ENCODE measurements at regions of chr10 and their contacts with region 1.

Region 1: GRCh38 chr10:3538658-3539531 is 246.1 kb downstream of the KLF6 start:
- DNase-seq: peak; percentile 59 to 92
- H3K4me3 ChIP-seq: peak overlapping the region in 1 of 2 donors; percentile 50
- H3K27ac ChIP-seq: peak overlapping the region; percentile 35 to 61
- H3K4me1 ChIP-seq: peaks cover 0 to 20% of the 10 kb centered on the region in 2 donors
- H3K27me3 ChIP-seq: no peaks in the 10 kb centered on the region
- CTCF ChIP-seq: no peak

Region 2: DNA sequence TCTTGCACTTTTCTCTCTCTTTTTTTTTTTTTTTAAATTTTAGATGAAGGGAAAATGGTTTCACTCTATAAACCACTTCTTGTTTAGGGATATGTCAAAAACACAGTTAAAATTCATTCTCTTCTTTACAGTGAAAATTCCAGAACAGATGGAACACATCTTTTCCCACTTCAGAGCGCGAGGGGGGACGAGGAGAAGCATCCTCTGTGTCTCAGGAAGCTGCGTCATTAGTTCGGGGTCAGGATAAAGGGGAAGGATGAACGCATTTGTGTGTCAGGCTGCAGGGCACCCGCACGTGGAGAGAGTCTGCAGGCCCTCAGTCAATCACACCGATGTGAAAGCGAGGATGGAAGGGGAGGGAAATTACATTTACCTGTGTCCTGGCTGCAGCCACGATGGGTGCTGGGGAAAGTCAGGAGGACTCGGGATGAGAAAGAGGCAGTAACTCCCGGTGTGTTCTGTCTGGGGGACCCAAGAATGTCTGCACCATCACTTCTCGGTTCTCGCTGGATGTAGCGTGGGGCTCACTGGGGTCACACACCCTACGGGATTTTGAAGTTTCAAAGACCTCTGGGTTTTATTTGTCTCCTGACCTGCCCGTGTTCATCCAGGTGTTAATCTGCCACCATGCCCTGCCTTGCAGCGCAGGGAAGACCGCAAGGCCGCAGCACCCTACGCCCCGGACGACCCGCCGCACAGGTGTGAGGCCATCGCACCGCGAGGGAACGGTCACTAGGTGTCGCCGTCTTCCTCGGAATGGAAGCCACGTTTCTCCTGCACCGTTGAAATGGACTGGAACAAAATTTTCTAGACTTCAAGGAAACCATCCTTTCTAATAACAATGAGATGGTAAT is 299.6 kb before region 1 on chr10:
- intact Hi-C with region 1: loop called (anchors 5 kb)
- DNase-seq: peak in 1 of 2 donors; percentile 83
- H3K4me3 ChIP-seq: no peak overlapping the region
- H3K27ac ChIP-seq: peak overlapping the region in 1 of 2 donors; percentile 54
- H3K4me1 ChIP-seq: peaks cover 0 to 6% of the 10 kb centered on the region in 2 donors
- H3K27me3 ChIP-seq: no peaks in the 10 kb centered on the region
- CTCF ChIP-seq: peak; percentile 89 to 97 (median 90)

Region 3: GRCh38 chr10:3500408-3500856 is 38.5 kb before region 1 on chr10:
- intact Hi-C with region 1: loop called (anchors 5 kb)
- DNase-seq: peak in 1 of 2 donors; percentile 90
- H3K4me3 ChIP-seq: peak overlapping the region in 1 of 2 donors; percentile 20
- H3K27ac ChIP-seq: peak overlapping the region in 1 of 2 donors; percentile 17
- H3K4me1 ChIP-seq: peaks cover 0 to 10% of the 10 kb centered on the region in 2 donors
- H3K27me3 ChIP-seq: no peaks in the 10 kb centered on the region
- CTCF ChIP-seq: no peak

Region 4: DNA sequence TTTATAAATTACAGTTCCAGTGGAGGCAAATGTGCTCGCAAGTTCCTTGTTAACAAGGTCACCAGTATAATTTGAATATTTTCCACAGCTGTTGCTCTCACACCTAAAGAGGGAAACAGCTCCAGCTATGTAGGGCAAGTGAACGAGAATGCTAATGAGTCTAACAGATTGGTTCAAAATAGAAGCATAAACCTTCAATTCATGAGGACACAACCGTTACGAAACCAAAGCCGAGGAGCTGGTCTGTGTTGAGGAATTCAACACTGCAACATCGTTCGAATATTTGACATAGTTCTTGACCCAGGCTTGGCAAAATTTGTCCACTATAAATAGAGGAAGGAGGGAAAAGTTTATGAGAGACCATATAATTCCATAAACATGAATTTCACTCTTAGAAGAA is 84.9 kb after region 1 on chr10:
- intact Hi-C with region 1: loop called (anchors 2 kb)
- DNase-seq: peak in 1 of 2 donors; percentile 75
- H3K4me3 ChIP-seq: peak overlapping the region in 1 of 2 donors; percentile 42
- H3K27ac ChIP-seq: peak overlapping the region; percentile 50 to 67
- H3K4me1 ChIP-seq: peaks cover 3 to 12% of the 10 kb centered on the region in 2 donors
- H3K27me3 ChIP-seq: no peaks in the 10 kb centered on the region
- CTCF ChIP-seq: no peak

Region 5: GRCh38 chr10:3776796-3777571 is 238.1 kb after region 1 on chr10:
- intact Hi-C with region 1: loop called (anchors 5 kb)
- DNase-seq: peak; percentile 53 to 92
- H3K4me3 ChIP-seq: peak overlapping the region; percentile 79 to 99
- H3K27ac ChIP-seq: peak overlapping the region; percentile 92 to 97
- H3K4me1 ChIP-seq: peaks cover 21 to 45% of the 10 kb centered on the region in 2 donors
- H3K27me3 ChIP-seq: no peaks in the 10 kb centered on the region
- CTCF ChIP-seq: no peak

Measured in ascending aorta (tissue), 2 donors.